WTC11 (cell line): ENCODE measurements at regions of chr11 and their contacts with region 1.

Region 1: GRCh38 chr11:113376156-113376555 is 11.4 kb upstream of the ANKK1 start:
- DNase-seq: no peak
- ATAC-seq: no peak
- H3K4me3 Mint-ChIP-seq: no peak overlapping the region
- H3K27ac Mint-ChIP-seq: no peak overlapping the region
- H3K4me1 Mint-ChIP-seq: peaks cover 14% of the 10 kb centered on the region
- H3K27me3 Mint-ChIP-seq: no peaks in the 10 kb centered on the region; the same call in 1 of the 2 replicates
- CTCF ChIP-seq: no peak

Region 2: GRCh38 chr11:113387605-113388211 is 11.6 kb after region 1 on chr11 and contains the start of gene ANKK1:
- CTCF ChIA-PET with region 1: interaction called, 13 read pairs
- POLR2A ChIA-PET with region 1: no interaction called
- DNase-seq: peak; percentile 80
- ATAC-seq: peak; percentile 88
- H3K4me3 Mint-ChIP-seq: peak within 1 kb of the TSS; percentile 43
- H3K27ac Mint-ChIP-seq: no peak within 1 kb of the TSS
- H3K4me1 Mint-ChIP-seq: peaks cover 12% of the 10 kb centered on the region
- H3K27me3 Mint-ChIP-seq: peaks cover 6% of the 10 kb centered on the region; the same call in 1 of the 2 replicates
- CTCF ChIP-seq: no peak; the same call in none of the 2 replicates
- total RNA-seq, gene ANKK1: 0.09 to 0.15 TPM in 2 of 3 replicates, not detected in the other

Region 3: GRCh38 chr11:113411536-113411935 is 35.4 kb after region 1 on chr11:
- CTCF ChIA-PET with region 1: no interaction called
- POLR2A ChIA-PET with region 1: no interaction called
- DNase-seq: no peak
- ATAC-seq: no peak
- H3K4me3 Mint-ChIP-seq: no peak overlapping the region
- H3K27ac Mint-ChIP-seq: no peak overlapping the region
- H3K4me1 Mint-ChIP-seq: no peaks in the 10 kb centered on the region
- H3K27me3 Mint-ChIP-seq: no peaks in the 10 kb centered on the region
- CTCF ChIP-seq: no peak

Region 4: GRCh38 chr11:113436672-113437252 is 60.6 kb after region 1 on chr11:
- CTCF ChIA-PET with region 1: no interaction called
- POLR2A ChIA-PET with region 1: no interaction called
- DNase-seq: no peak
- ATAC-seq: no peak
- H3K4me3 Mint-ChIP-seq: no peak overlapping the region
- H3K27ac Mint-ChIP-seq: no peak overlapping the region
- H3K4me1 Mint-ChIP-seq: peaks cover 11% of the 10 kb centered on the region
- H3K27me3 Mint-ChIP-seq: peaks cover 4% of the 10 kb centered on the region; the same call in 1 of the 2 replicates
- CTCF ChIP-seq: no peak